Endothelial cell of umbilical vein (primary cell): ENCODE measurements at regions of chr4 and their contacts with region 1.

Region 1: DNA sequence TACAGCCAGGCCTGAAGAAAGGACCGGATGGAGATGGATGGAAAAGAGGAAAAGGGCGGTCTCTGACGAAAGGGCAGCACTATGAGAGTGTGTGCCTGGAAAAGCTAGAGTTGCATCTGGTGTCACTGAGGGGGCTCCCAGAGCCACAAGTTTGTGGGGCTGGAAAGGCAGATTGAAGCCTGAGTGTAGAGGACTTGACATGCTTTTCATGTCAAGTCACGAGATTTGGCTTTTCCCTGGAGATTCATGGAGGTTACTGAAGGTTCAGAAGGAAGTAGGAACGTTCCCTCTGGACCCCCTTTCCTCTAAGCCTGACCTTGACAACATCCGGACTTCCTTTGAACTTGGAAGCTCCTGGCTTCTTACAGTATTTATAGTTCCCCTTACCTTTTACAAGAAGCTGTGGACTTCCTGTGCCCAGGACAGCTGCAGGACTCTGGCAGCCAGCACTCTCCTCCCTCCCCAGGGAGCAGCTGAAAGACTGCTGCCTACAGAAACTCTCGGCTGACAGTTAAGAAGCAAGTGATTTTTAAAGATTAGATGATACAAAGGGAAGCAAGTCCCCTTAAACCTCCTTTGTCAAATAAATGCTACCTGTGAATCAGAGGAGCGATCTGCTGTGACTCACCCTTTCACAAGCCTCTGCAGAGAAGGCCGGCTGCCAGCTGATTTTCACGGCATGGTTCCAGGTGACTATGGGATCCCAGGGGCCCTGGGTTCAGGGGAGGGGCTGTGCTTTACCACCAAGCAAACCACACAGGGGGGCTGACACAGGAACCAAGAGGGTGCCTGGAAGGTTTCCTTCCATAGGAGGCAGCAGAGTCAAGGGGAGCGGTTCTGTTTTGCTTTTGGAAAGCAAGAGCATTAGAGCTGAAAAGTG is 72.9 kb upstream of the STIM2 start:
- DNase-seq: peak; percentile 52
- H3K4me3 ChIP-seq: no peak overlapping the region
- H3K27ac ChIP-seq: peak overlapping the region; percentile 39
- H3K4me1 ChIP-seq: peaks cover 29% of the 10 kb centered on the region
- H3K27me3 ChIP-seq: no peaks in the 10 kb centered on the region
- CTCF ChIP-seq: peak; percentile 8 to 29
- POLR2A ChIP-seq: no peak

Region 2: DNA sequence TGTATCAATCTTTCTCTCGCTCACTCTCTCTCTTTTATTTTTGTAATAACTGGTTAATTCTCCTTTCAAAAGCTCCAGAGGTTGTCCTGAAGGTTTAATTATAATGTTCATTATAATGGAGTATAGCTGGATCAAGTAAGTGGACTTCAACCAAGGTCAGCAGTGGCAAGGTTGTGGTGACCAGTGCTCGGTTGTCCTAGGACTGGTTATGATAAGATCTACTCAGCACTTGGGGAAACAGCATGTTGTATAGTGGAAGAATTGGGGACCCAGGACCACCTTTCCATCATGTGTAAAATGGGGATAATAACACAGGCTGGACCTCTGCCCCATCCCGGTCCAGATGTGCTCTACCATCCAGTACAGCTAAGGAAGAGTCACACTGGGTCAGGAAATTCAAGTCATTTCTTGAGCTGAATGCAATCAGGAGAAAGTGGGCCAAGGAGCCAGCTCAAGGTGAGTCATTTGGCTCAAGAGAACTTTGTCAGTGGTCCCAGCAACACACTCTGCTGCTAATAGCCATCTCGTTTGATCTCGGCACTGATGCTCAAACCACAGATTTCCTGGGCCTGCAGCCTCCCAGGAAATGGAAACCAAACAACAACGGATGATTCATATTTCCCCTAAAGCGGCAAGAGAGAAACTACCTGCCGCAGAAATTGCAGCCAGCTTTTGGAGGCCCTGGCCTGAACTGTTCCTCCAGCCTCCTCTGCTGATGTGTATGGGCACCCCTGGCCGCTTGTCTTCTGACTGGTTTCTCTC is 590.5 kb before region 1 on chr4:
- CTCF ChIA-PET with region 1: no interaction called
- POLR2A ChIA-PET with region 1: no interaction called
- dilution Hi-C with region 1: no loop called
- intact Hi-C with region 1: no loop called
- DNase-seq: no peak
- H3K4me3 ChIP-seq: no peak overlapping the region
- H3K27ac ChIP-seq: no peak overlapping the region
- H3K4me1 ChIP-seq: no peaks in the 10 kb centered on the region
- H3K27me3 ChIP-seq: no peaks in the 10 kb centered on the region
- CTCF ChIP-seq: no peak
- POLR2A ChIP-seq: no peak

Region 3: DNA sequence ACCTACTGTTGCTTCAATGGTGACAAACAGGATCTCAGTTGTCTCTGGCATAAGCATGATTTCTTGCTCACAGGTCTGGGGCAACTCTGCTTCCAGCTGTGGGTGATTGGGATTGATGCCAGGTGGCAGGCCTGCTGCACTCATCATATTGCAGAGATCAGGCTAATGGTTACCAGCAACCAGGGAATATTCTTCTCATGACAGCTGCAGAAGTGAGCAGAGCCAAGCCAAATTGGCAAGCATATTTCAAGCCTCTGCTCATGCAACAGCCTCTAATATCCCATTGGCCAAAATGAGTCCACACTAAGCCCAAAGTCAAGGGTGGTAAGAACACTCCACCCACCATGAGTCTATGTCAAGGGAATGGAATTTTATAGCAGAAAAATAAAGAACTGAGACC is 230.5 kb before region 1 on chr4:
- CTCF ChIA-PET with region 1: no interaction called
- POLR2A ChIA-PET with region 1: no interaction called
- dilution Hi-C with region 1: no loop called
- intact Hi-C with region 1: no loop called
- DNase-seq: no peak
- H3K4me3 ChIP-seq: no peak overlapping the region
- H3K27ac ChIP-seq: no peak overlapping the region
- H3K4me1 ChIP-seq: no peaks in the 10 kb centered on the region
- H3K27me3 ChIP-seq: peaks cover 1 to 29% of the 10 kb centered on the region in 2 experiments
- CTCF ChIP-seq: no peak
- POLR2A ChIP-seq: no peak

Region 4: DNA sequence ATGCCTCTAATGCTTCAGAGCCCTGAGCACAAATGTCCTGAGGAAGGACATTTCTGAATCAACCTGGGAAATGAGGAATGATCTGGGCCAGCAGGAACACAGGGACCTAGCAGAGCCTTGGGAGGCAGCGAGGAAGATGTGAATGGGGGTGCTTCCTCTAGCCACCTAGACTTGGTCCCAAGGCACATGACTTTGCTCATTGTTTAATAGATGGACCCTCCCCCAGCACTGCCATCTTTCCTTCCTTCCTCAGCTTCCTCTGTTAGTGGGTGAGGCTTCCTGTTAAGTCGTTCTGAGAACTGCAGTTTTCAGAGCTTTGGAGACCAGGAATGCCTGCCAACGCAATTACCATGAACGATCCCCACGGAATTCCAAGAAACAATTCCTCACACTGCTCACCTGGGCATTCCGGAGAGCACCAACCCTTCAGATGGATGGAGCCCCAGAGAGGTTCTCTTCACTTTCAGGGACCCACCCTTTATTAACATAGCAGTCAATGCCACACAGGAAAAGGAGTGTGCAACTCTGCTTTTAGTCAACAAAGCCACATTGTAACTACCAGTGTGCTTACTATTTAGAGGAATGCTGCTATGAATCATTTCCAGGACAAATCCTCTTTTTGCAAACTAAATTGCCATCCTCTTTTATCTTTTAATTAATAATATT is 24.5 kb after region 1 on chr4:
- CTCF ChIA-PET with region 1: interaction called, 7 read pairs
- POLR2A ChIA-PET with region 1: no interaction called
- dilution Hi-C with region 1: no loop called
- intact Hi-C with region 1: loop called (anchors 2 kb)
- DNase-seq: peak; percentile 36
- H3K4me3 ChIP-seq: no peak overlapping the region
- H3K27ac ChIP-seq: peak overlapping the region; percentile 73
- H3K4me1 ChIP-seq: peaks cover 18% of the 10 kb centered on the region
- H3K27me3 ChIP-seq: no peaks in the 10 kb centered on the region
- CTCF ChIP-seq: no peak
- POLR2A ChIP-seq: peak; percentile 17

Region 5: GRCh38 chr4:27908356-27908755 is 1120.7 kb after region 1 on chr4:
- CTCF ChIA-PET with region 1: no interaction called
- POLR2A ChIA-PET with region 1: no interaction called
- dilution Hi-C with region 1: no loop called
- intact Hi-C with region 1: no loop called
- DNase-seq: no peak
- H3K4me3 ChIP-seq: no peak overlapping the region
- H3K27ac ChIP-seq: no peak overlapping the region
- H3K4me1 ChIP-seq: no peaks in the 10 kb centered on the region
- H3K27me3 ChIP-seq: no peaks in the 10 kb centered on the region
- CTCF ChIP-seq: no peak
- POLR2A ChIP-seq: no peak